ENCODE measurements at regions of chr20 and their contacts with region 1.

Region 1: GRCh38 chr20:16975682-16976081 is 227.5 kb downstream of the OTOR start:
- DNase-seq: no peak
- ATAC-seq: no peak
- H3K4me3 ChIP-seq: no peak overlapping the region
- H3K27ac ChIP-seq: no peak overlapping the region
- H3K4me1 ChIP-seq: no peaks in the 10 kb centered on the region
- H3K27me3 ChIP-seq: no peaks in the 10 kb centered on the region
- CTCF ChIP-seq: no peak
- POLR2A ChIP-seq: no peak

Region 2: GRCh38 chr20:17083738-17084137 is 108.1 kb after region 1 on chr20:
- in situ Hi-C with region 1: loop called in 1 of 4 experiments (anchors 25 kb)
- intact Hi-C with region 1: no loop called
- DNase-seq: no peak
- ATAC-seq: no peak
- H3K4me3 ChIP-seq: no peak overlapping the region
- H3K27ac ChIP-seq: no peak overlapping the region
- H3K4me1 ChIP-seq: no peaks in the 10 kb centered on the region
- H3K27me3 ChIP-seq: no peaks in the 10 kb centered on the region
- CTCF ChIP-seq: no peak
- POLR2A ChIP-seq: no peak